ENCODE measurements at regions of chrX and their contacts with region 1.

Region 1: DNA sequence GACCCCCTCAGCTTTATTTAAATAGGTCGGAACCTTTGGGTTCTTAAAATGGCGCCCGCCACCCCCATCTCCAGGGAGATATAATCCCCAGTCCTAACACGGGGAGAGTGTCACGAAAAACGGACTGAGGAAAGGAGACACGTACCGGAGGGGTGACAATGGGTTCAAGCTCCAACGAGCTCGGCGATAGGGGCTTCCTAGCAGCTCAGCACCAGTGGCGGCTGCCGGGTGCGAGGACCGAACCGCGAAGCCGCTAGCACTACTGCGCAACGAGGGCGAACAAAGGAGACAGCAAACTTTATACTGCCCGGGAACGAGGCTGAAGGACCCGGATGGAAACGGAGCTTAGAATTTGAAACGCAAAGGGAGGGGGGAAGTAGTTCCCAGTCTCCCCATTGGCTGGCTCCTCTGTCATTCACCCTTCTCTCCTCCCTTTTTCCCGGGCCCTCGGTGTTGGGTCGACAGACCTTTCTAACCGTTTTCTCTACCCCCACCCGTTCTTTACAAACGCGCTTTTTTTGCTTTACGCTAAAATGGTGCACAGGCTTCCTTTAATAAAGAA is at the start of gene RBMX:
- DNase-seq: peak; percentile 79 to 95
- ATAC-seq: peak; percentile 93 to 98 (median 97)
- H3K4me3 ChIP-seq: peak within 1 kb of the TSS; percentile 50 to 92 (median 79)
- H3K27ac ChIP-seq: peak within 1 kb of the TSS; percentile 86 to 97 (median 94)
- H3K4me1 ChIP-seq: peaks cover 0 to 24% (median 7%) of the 10 kb centered on the region in 9 donors
- H3K27me3 ChIP-seq: no peaks in the 10 kb centered on the region
- CTCF ChIP-seq: no peak
- total RNA-seq, gene RBMX: 85.7 to 107 (median 91.0) TPM

Region 2: GRCh38 chrX:136735601-136736000 is 144.9 kb before region 1 on chrX:
- intact Hi-C with region 1: loop called in 1 of 10 experiments (anchors 10 kb)
- DNase-seq: no peak
- ATAC-seq: peak in 5 of 8 donors; percentile 42 to 76 (median 48)
- H3K4me3 ChIP-seq: no peak overlapping the region
- H3K27ac ChIP-seq: peak overlapping the region in 7 of 10 donors; percentile 21 to 67 (median 56)
- H3K4me1 ChIP-seq: peaks cover 0 to 21% (median 16%) of the 10 kb centered on the region in 9 donors
- H3K27me3 ChIP-seq: peaks cover 0 to 13% (median 0%) of the 10 kb centered on the region in 7 donors
- CTCF ChIP-seq: no peak

Region 3: GRCh38 chrX:136747003-136747986 is 133.2 kb before region 1 on chrX:
- intact Hi-C with region 1: no loop called
- DNase-seq: no peak
- ATAC-seq: peak in 4 of 8 donors; percentile 30 to 75 (median 61)
- H3K4me3 ChIP-seq: no peak overlapping the region
- H3K27ac ChIP-seq: peak overlapping the region in 9 of 10 donors; percentile 10 to 82 (median 39)
- H3K4me1 ChIP-seq: peaks cover 0 to 77% (median 37%) of the 10 kb centered on the region in 9 donors
- H3K27me3 ChIP-seq: peaks cover 0 to 7% (median 0%) of the 10 kb centered on the region in 7 donors
- CTCF ChIP-seq: no peak

Region 4: DNA sequence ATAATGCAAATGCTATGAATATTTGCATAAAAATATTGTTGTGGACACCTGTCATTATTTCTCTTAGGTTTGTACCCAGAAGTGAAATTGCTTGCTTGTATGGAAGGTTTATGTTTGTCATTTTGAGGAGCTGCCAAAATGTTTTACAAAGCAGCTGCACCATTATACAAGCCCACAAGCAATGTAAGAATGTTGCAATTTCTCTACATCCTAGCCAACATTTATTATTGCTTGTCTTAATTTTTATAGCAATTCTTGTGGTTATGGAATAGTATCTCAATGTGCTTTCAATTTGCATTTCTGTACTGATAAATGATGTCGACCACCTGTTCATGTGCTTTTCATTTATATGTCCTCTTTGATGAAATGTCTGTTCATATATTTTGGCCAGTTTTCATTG is 18.7 kb after region 1 on chrX:
- intact Hi-C with region 1: no loop called
- DNase-seq: no peak
- ATAC-seq: no peak
- H3K4me3 ChIP-seq: no peak overlapping the region
- H3K27ac ChIP-seq: no peak overlapping the region
- H3K4me1 ChIP-seq: no peaks in the 10 kb centered on the region
- H3K27me3 ChIP-seq: no peaks in the 10 kb centered on the region
- CTCF ChIP-seq: no peak

Region 5: GRCh38 chrX:136909706-136910564 is 29.4 kb after region 1 on chrX:
- intact Hi-C with region 1: loop called in 1 of 10 experiments (anchors 1 kb)
- DNase-seq: peak; percentile 40 to 89
- ATAC-seq: peak; percentile 83 to 91 (median 88)
- H3K4me3 ChIP-seq: peak overlapping the region; percentile 40 to 84 (median 67)
- H3K27ac ChIP-seq: peak overlapping the region; percentile 22 to 84 (median 82)
- H3K4me1 ChIP-seq: peaks cover 0 to 15% (median 0%) of the 10 kb centered on the region in 9 donors
- H3K27me3 ChIP-seq: no peaks in the 10 kb centered on the region
- CTCF ChIP-seq: no peak

Region 6: GRCh38 chrX:136961594-136962135 is 81.1 kb after region 1 on chrX:
- intact Hi-C with region 1: no loop called
- DNase-seq: no peak
- ATAC-seq: no peak
- H3K4me3 ChIP-seq: no peak overlapping the region
- H3K27ac ChIP-seq: no peak overlapping the region
- H3K4me1 ChIP-seq: no peaks in the 10 kb centered on the region
- H3K27me3 ChIP-seq: no peaks in the 10 kb centered on the region
- CTCF ChIP-seq: no peak